ENCODE measurements at regions of chr3 and their contacts with region 1.

Region 1: DNA sequence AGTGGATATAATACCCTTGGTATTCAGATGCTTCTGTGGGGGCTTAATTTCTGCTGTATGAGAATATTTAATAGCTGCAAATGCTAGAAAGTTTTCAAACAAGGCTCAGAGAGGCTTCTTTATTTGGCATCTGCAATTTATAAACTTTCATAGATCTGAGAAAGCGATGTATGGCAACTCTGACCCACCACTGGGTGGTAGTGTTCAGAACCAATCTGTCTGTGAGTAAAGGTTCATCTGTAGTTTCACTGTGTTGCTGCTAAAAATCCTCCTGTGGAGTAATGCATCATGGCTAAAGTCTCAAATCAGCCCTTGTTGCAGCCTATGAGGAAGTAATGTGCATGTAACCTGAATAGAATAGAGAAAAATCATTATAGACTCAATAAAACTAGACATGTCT is 47.4 kb downstream of the CLSTN2 start:
- DNase-seq: peak in 17 of 42 donors; percentile 6 to 54 (median 26)

Region 2: DNA sequence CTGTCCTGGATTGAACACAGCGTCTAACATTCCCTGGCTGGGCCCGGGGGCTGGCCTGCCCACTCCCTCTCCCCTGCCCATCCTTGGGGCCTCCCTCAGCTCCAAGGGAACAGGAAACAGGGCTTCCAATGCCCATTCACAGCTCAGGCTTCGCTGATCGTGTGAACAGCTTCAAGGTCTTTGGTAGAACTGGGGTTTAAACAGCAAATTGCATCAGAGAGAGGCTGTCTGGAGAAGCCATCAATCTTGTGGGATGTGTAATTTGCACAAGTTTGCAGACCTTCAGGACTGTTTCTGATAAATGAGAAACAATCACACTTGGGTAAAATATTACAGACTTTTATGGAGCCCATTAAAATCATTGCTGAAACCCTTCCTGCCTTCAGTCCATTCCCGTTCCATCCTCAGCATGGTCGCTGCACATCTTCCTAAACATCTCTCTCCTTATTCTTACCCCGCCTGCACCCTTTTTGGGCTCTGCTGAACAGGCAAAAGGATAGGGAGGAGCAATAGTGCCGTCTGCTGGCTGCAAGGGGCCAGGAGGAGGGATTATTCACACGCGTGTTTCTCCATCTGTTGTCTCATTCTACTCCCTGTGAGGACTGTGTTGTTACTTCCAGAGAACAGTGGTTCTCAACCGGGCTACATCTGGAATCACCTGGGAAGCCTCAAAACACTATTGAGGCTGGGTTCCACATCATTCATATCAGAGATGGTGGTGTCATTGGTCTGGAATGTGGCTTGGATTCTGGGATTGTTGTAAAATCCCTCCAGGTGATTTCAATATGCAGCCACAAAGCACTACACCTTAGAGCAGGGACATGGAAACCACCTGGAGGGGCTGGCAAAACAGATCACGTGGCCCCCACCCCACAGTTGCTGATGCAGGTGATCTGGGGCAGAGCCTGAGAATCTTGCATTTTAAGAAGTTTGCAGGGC is 68.9 kb after region 1 on chr3:
- intact Hi-C with region 1: loop called (anchors 10 kb)
- DNase-seq: peak; percentile 20 to 75 (median 47)